ENCODE measurements at regions of chr13 and their contacts with region 1.

Region 1: DNA sequence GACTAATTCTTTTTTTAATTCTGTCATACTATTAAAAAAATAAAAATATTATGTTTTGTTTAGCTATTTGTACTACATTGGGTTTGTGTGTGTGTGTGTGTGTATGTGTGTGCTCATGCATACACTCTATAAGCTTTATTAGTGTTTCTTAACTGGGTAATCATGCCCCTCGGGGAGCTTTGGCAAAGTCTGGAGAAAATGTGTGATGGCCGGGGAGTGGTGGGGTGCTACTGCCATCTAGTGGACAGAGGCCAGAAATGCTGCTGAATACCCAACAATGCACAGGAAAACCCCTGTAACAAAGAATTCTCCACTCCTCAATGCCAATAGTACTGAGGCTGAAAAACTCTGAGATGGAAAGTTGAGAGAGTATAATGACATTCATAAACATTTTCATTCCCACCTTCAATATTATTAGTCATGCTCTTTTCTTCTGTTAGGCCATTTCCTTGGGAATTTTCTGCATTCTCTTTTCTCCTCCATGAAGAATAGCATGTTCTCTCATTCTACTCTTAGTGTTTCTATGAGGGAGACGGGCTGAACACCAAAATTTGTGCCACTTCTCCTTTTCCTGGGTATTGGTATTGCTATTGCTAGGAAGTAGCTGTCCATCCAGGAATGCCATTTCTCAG is 157.3 kb downstream of the DNAJC3 start:
- DNase-seq: peak; percentile 81
- H3K4me3 ChIP-seq: peak overlapping the region in 1 of 3 experiments; percentile 23
- H3K27ac ChIP-seq: peak overlapping the region; percentile 30
- H3K4me1 ChIP-seq: peaks cover 13% of the 10 kb centered on the region
- H3K27me3 ChIP-seq: no peaks in the 10 kb centered on the region
- CTCF ChIP-seq: peak; percentile 85 to 87
- POLR2A ChIP-seq: no peak

Region 2: DNA sequence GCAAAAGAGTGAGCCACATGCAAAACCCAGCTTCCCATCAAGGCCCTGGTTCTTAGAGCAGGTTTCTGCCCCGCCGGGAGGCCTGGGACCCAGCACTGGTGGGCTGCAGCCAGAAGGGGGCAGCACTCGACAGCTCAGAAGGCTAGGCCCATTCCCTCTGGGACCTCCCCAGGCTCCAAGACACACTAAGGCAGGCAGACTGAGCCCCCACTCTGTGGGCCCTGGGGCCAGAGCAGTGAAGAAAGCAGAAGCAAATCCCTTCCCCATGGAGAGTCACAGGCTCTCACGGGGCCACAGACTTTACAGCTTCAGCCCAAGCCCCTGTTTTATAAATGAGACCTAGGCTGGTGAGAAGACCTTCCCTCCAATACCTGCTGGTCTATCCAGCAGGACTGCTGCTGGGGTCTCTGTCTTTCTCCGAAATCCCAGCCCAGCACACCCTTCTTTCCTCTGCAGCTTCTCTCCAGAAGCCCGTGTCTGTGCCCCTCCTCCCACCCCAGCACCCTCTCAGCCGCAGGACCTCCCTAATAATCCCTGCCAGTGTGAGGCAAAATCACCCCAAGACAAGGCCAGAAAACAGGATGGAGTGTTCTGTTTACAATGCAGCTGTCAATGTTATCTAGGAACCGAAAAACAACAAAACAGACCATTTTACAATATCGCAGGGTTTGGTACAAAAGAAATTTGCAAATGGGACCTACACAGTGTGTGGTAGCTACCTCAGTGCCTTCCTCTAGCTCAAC is 642.3 kb before region 1 on chr13:
- CTCF ChIA-PET with region 1: interaction called, 89 read pairs
- POLR2A ChIA-PET with region 1: interaction called, 8 read pairs
- dilution Hi-C with region 1: no loop called
- intact Hi-C with region 1: loop called (anchors 1 kb)
- DNase-seq: peak; percentile 78
- H3K4me3 ChIP-seq: no peak overlapping the region
- H3K27ac ChIP-seq: no peak overlapping the region
- H3K4me1 ChIP-seq: no peaks in the 10 kb centered on the region
- H3K27me3 ChIP-seq: no peaks in the 10 kb centered on the region
- CTCF ChIP-seq: peak; percentile 90 to 97
- POLR2A ChIP-seq: no peak

Region 3: DNA sequence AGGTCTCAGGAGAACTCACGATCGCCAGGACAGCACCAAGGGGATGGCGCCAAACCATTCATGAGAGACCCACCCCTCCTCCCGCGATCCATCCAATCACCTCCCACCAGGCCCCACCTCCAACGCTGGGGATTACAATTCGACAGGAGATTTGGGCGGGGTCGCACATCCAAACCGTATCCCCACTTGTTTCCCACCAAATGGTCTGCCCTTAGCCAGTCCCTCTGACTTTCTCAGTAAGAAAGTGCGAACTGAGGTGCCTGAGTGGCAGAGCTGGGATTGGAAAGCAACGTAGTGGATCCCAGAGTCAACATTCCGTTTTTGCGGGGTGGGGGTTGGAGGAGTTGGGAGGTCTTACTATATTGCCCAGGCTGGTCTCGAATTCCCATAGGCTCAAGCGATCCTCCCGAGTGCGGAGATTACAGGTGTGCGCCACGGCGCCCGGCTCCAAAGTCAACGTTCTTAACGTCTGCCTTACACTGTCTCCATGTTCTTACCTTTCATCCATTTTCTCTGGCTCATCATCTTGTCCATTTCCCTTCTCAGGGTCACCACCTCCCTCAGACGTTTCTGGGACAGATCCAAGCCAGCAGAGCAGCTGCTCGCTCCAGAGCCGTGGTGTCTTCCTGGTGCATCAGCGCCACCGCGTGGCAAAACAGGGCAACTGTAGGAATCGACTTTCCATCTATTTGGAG is 430.3 kb before region 1 on chr13:
- CTCF ChIA-PET with region 1: interaction called, 90 read pairs
- POLR2A ChIA-PET with region 1: interaction called, 3 read pairs
- dilution Hi-C with region 1: no loop called
- intact Hi-C with region 1: loop called (anchors 1 kb)
- DNase-seq: peak; percentile 78
- H3K4me3 ChIP-seq: peak overlapping the region in 2 of 3 experiments; percentile 0 to 18
- H3K27ac ChIP-seq: no peak overlapping the region
- H3K4me1 ChIP-seq: peaks cover 5% of the 10 kb centered on the region
- H3K27me3 ChIP-seq: no peaks in the 10 kb centered on the region
- CTCF ChIP-seq: peak; percentile 88 to 90
- POLR2A ChIP-seq: no peak

Region 4: GRCh38 chr13:95536632-95537241 is 297.5 kb before region 1 on chr13:
- CTCF ChIA-PET with region 1: interaction called, 36 read pairs
- POLR2A ChIA-PET with region 1: no interaction called
- dilution Hi-C with region 1: no loop called
- intact Hi-C with region 1: loop called (anchors 1 kb)
- DNase-seq: peak; percentile 62
- H3K4me3 ChIP-seq: no peak overlapping the region
- H3K27ac ChIP-seq: no peak overlapping the region
- H3K4me1 ChIP-seq: peaks cover 34% of the 10 kb centered on the region
- H3K27me3 ChIP-seq: no peaks in the 10 kb centered on the region
- CTCF ChIP-seq: peak in 1 of 2 donors; percentile 25
- POLR2A ChIP-seq: no peak

Region 5: GRCh38 chr13:95644601-95645052 is 189.6 kb before region 1 on chr13 and contains the start of gene DZIP1:
- CTCF ChIA-PET with region 1: interaction called, 10 read pairs
- POLR2A ChIA-PET with region 1: no interaction called
- dilution Hi-C with region 1: no loop called
- intact Hi-C with region 1: loop called (anchors 1 kb)
- DNase-seq: peak; percentile 84
- H3K4me3 ChIP-seq: peak within 1 kb of the TSS; percentile 78 to 93 (median 86)
- H3K27ac ChIP-seq: peak within 1 kb of the TSS; percentile 39
- H3K4me1 ChIP-seq: peaks cover 29% of the 10 kb centered on the region
- H3K27me3 ChIP-seq: no peaks in the 10 kb centered on the region
- CTCF ChIP-seq: no peak
- POLR2A ChIP-seq: no peak
- total RNA-seq, gene DZIP1: 32.1 and 33.9 TPM in 2 replicates

Region 6: GRCh38 chr13:95704510-95704909 is 129.7 kb before region 1 on chr13:
- CTCF ChIA-PET with region 1: interaction called, 26 read pairs
- POLR2A ChIA-PET with region 1: no interaction called
- dilution Hi-C with region 1: no loop called
- intact Hi-C with region 1: no loop called
- DNase-seq: no peak
- H3K4me3 ChIP-seq: no peak overlapping the region
- H3K27ac ChIP-seq: no peak overlapping the region
- H3K4me1 ChIP-seq: no peaks in the 10 kb centered on the region
- H3K27me3 ChIP-seq: no peaks in the 10 kb centered on the region
- CTCF ChIP-seq: peak; percentile 27 to 31
- POLR2A ChIP-seq: no peak

Region 7: GRCh38 chr13:95741584-95742563 is 92.4 kb before region 1 on chr13:
- CTCF ChIA-PET with region 1: no interaction called
- POLR2A ChIA-PET with region 1: no interaction called
- dilution Hi-C with region 1: no loop called
- intact Hi-C with region 1: no loop called
- DNase-seq: no peak
- H3K4me3 ChIP-seq: no peak overlapping the region
- H3K27ac ChIP-seq: no peak overlapping the region
- H3K4me1 ChIP-seq: no peaks in the 10 kb centered on the region
- H3K27me3 ChIP-seq: no peaks in the 10 kb centered on the region
- CTCF ChIP-seq: no peak
- POLR2A ChIP-seq: no peak

Region 8: DNA sequence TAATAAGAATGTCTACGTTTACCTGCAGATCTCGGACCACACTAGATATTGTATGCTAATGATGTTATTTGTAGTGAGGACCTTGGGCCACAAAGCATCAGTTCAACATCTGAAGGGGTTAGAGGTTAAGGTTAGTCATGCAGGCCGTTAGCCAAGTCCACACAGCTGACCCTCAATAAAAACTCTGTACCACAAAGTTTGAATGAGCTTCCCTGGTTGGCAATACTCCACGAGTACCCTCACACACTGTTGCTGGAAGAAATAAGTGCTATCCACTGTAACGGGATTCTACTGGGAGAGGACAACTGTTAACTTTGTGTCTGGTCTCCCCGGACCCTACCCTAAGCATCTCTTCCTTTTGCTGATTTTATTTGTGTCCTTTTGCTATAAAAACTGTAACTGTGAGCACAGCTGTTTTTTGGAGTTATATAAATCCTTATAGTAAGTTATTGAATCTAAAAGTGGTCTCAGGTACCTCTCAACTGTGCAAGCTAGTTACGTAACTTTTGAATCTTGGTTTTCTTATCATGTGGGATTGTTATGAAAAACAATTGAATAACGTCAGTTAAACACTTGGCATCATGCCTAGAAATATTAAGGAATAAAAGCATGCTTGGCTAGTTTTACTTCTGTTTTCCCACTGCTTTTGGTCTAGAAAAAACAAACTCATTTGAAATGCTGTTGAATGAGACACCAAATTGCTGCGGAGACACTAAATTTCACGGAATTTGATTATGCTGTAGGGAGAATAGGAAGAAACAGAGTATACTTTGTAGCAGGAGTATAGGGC is 24.2 kb after region 1 on chr13:
- CTCF ChIA-PET with region 1: interaction called, 12 read pairs
- POLR2A ChIA-PET with region 1: no interaction called
- dilution Hi-C with region 1: no loop called
- intact Hi-C with region 1: no loop called
- DNase-seq: peak; percentile 90
- H3K4me3 ChIP-seq: no peak overlapping the region
- H3K27ac ChIP-seq: peak overlapping the region; percentile 57
- H3K4me1 ChIP-seq: peaks cover 23% of the 10 kb centered on the region
- H3K27me3 ChIP-seq: no peaks in the 10 kb centered on the region
- CTCF ChIP-seq: no peak
- POLR2A ChIP-seq: no peak

Region 9: DNA sequence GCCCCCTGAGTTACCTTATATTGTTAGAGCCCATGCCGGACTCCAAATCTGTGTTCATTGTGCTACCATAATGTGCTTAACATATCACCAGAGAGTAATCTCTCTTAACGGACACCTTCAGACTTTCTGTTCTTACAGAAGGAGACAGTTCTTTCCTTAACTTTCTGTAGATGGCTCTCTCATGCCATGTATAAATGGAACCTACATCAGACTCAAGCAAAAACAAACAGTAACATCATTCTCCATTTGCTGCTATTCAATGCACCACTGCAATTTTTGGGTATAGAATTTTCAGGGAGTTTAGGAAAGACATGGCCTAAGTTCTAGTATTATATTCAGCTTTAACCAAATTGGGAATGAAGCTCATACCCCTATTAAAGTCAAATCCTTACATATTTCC is 231.6 kb after region 1 on chr13:
- CTCF ChIA-PET with region 1: no interaction called
- POLR2A ChIA-PET with region 1: no interaction called
- dilution Hi-C with region 1: no loop called
- intact Hi-C with region 1: no loop called
- DNase-seq: no peak
- H3K4me3 ChIP-seq: no peak overlapping the region
- H3K27ac ChIP-seq: no peak overlapping the region
- H3K4me1 ChIP-seq: no peaks in the 10 kb centered on the region
- H3K27me3 ChIP-seq: peaks cover 14 to 33% of the 10 kb centered on the region in 2 experiments
- CTCF ChIP-seq: no peak
- POLR2A ChIP-seq: no peak

Region 10: GRCh38 chr13:96130818-96131340 is 296.6 kb after region 1 on chr13:
- CTCF ChIA-PET with region 1: no interaction called
- POLR2A ChIA-PET with region 1: no interaction called
- dilution Hi-C with region 1: no loop called
- intact Hi-C with region 1: no loop called
- DNase-seq: no peak
- H3K4me3 ChIP-seq: no peak overlapping the region
- H3K27ac ChIP-seq: no peak overlapping the region
- H3K4me1 ChIP-seq: no peaks in the 10 kb centered on the region
- H3K27me3 ChIP-seq: peaks cover 3 to 4% of the 10 kb centered on the region in 2 experiments
- CTCF ChIP-seq: no peak
- POLR2A ChIP-seq: no peak

Region 11: GRCh38 chr13:96492766-96493165 is 658.5 kb after region 1 on chr13:
- CTCF ChIA-PET with region 1: no interaction called
- POLR2A ChIA-PET with region 1: no interaction called
- dilution Hi-C with region 1: no loop called
- intact Hi-C with region 1: no loop called
- DNase-seq: no peak
- H3K4me3 ChIP-seq: no peak overlapping the region
- H3K27ac ChIP-seq: no peak overlapping the region
- H3K4me1 ChIP-seq: no peaks in the 10 kb centered on the region
- H3K27me3 ChIP-seq: no peaks in the 10 kb centered on the region
- CTCF ChIP-seq: no peak
- POLR2A ChIP-seq: no peak